Activated CD4-positive, alpha-beta memory T cell treated with anti-CD3 and anti-CD28 coated beads for 36 hours (primary cell): ENCODE measurements at regions of chr1 and their contacts with region 1.

Region 1: DNA sequence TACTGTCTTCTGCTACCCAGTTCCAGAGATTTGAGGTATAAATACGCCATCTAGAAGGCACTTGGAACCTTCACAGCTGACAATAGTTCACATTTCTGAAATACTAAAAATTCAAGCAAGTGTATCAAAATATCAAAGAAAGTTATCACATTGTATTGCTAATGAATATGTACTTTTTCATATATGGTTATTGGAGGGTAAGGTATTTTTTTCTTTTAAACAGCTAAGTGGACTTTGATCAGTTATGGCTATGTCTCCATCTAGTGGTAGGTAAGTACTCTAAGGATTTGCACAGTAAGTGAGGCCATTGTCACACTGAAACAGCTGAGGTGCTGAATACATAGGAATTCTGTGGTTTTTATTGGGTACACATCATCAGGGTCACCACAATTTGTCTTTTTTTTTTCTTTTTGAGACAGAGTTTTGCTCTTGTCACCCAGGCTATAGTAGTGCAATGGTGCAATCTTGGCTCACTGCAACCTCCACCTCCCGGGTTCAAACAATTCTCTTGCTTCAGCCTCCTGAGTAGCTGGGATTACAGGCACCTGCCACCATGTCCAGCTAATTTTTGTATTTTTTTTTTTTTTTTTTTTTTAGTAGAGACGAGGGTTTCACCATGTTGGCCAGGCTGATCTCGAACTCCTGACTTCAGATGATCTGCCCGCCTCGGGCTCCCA is 49.1 kb upstream of the CR2 start:
- DNase-seq: no peak
- H3K4me3 Mint-ChIP-seq: no peak overlapping the region
- H3K27ac Mint-ChIP-seq: no peak overlapping the region
- H3K4me1 Mint-ChIP-seq: peaks cover 13% of the 10 kb centered on the region
- H3K27me3 Mint-ChIP-seq: peaks cover 5% of the 10 kb centered on the region

Region 2: GRCh38 chr1:207052911-207053769 is 351.8 kb before region 1 on chr1 and contains the start of gene PFKFB2:
- CTCF ChIA-PET with region 1: interaction called, 7 read pairs
- POLR2A ChIA-PET with region 1: no interaction called
- intact Hi-C with region 1: loop called (anchors 1 kb)
- DNase-seq: peak; percentile 95
- H3K4me3 Mint-ChIP-seq: peak within 1 kb of the TSS; percentile 93
- H3K27ac Mint-ChIP-seq: peak within 1 kb of the TSS; percentile 67
- H3K4me1 Mint-ChIP-seq: peaks cover 33% of the 10 kb centered on the region
- H3K27me3 Mint-ChIP-seq: no peaks in the 10 kb centered on the region
- total RNA-seq, gene PFKFB2: 2.1 to 2.5 TPM

Region 3: GRCh38 chr1:207084701-207085180 is 320.2 kb before region 1 on chr1:
- CTCF ChIA-PET with region 1: interaction called, 62 read pairs
- POLR2A ChIA-PET with region 1: no interaction called
- intact Hi-C with region 1: loop called (anchors 1 kb)
- DNase-seq: peak; percentile 60
- H3K4me3 Mint-ChIP-seq: no peak overlapping the region
- H3K27ac Mint-ChIP-seq: no peak overlapping the region
- H3K4me1 Mint-ChIP-seq: peaks cover 14% of the 10 kb centered on the region
- H3K27me3 Mint-ChIP-seq: peaks cover 23% of the 10 kb centered on the region

Region 4: DNA sequence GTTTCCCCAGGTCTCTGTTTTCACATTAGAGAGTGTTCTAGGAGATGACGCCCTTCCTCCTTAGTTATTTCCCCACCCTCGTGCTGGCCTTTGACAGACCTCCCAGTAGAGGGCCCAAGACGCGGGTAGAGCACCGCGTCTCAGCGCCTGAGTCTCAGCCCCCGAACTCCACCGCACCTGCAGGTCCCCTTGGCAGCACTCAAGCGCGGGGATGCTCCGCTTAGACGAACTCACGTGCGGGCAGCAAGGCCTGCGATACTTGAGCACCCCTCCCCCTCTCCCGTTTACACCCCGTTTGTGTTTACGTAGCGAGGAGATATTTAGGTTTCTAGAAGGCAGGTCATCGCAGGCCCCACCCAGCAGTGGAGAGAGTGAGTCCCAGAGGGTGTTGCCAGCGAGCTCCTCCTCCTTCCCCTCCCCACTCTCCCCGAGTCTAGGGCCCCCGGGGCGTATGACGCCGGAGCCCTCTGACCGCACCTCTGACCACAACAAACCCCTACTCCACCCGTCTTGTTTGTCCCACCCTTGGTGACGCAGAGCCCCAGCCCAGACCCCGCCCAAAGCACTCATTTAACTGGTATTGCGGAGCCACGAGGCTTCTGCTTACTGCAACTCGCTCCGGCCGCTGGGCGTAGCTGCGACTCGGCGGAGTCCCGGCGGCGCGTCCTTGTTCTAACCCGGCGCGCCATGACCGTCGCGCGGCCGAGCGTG is 83.8 kb before region 1 on chr1 and contains the start of gene CD55:
- CTCF ChIA-PET with region 1: interaction called, 12 read pairs
- POLR2A ChIA-PET with region 1: interaction called, 4 read pairs
- intact Hi-C with region 1: loop called (anchors 2 kb)
- DNase-seq: peak; percentile 99
- H3K4me3 Mint-ChIP-seq: peak within 1 kb of the TSS; percentile 92
- H3K27ac Mint-ChIP-seq: peak within 1 kb of the TSS; percentile 96
- H3K4me1 Mint-ChIP-seq: peaks cover 33% of the 10 kb centered on the region
- H3K27me3 Mint-ChIP-seq: no peaks in the 10 kb centered on the region
- total RNA-seq, gene CD55: 40.4 to 42.3 TPM

Region 5: GRCh38 chr1:207389740-207390464 is 15.1 kb before region 1 on chr1:
- CTCF ChIA-PET with region 1: interaction called, 3 read pairs
- POLR2A ChIA-PET with region 1: interaction called, 3 read pairs
- intact Hi-C with region 1: loop called (anchors 1 kb)
- DNase-seq: no peak
- H3K4me3 Mint-ChIP-seq: no peak overlapping the region
- H3K27ac Mint-ChIP-seq: peak overlapping the region; percentile 30
- H3K4me1 Mint-ChIP-seq: peaks cover 7% of the 10 kb centered on the region
- H3K27me3 Mint-ChIP-seq: peaks cover 12% of the 10 kb centered on the region